ENCODE measurements at regions of chr11 and their contacts with region 1.

Region 1: GRCh38 chr11:130671801-130672700 is 223.6 kb downstream of the ADAMTS15 start:
- DNase-seq: peak; percentile 94
- ATAC-seq: peak; percentile 89
- H3K4me3 ChIP-seq: no peak overlapping the region
- H3K27ac ChIP-seq: peak overlapping the region; percentile 41; the same call in 1 of the 2 replicates
- H3K4me1 ChIP-seq: peaks cover 20% of the 10 kb centered on the region
- H3K27me3 ChIP-seq: no peaks in the 10 kb centered on the region
- CTCF ChIP-seq: no peak
- POLR2A ChIP-seq: no peak
- RAD21 ChIP-seq: peak; percentile 40

Region 2: DNA sequence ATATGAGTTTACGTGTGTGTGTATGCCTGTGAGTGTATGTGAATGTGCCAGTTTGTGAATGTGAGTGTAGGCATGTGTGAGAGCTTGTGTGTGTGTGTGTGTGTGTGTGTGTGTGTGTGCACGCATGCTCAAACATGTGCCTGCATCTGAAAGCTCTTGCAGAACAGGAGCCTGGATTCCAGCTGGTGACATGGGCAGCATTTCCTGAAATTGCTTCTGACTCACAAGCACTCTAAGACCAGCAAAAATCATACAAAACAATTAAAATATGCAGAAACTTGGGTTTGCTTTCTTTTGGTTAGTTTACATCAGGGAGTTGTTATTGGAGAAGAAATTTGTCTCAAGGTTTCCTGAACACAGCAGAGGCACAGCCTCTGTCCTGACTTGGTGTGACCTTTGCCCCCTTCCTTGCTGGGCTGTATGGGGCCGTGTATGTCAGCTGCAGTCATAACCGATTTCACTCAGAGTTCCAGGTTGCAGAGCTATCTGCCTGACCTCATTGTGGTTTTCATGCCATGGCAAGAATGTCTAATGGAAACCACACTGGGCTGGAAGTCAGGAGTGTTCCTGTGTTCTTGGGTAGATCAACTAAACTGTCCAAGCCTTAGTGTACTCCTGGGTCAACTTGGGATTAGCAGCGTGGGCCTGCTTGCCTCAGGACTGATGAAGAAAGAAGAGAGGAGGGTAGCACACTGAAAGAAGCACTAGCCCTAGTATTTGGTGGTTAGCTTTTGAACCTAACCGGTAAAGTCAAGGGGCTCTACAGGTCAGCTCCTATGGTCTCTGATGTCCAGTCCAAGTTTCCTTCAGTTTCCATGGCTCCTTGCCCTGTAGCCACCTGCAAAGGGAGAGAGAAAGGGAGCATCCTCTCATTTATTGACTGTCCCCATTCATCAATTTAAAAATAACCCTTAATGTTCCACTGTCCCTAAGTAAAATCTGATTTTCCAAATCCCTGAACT is 100.5 kb after region 1 on chr11:
- CTCF ChIA-PET with region 1: no interaction called
- POLR2A ChIA-PET with region 1: no interaction called
- dilution Hi-C with region 1: no loop called
- in situ Hi-C with region 1: no loop called
- intact Hi-C with region 1: loop called (anchors 5 kb)
- DNase-seq: peak; percentile 97
- ATAC-seq: peak; percentile 89
- H3K4me3 ChIP-seq: no peak overlapping the region
- H3K27ac ChIP-seq: peak overlapping the region; percentile 77; the same call in 1 of the 2 replicates
- H3K4me1 ChIP-seq: peaks cover 22% of the 10 kb centered on the region
- H3K27me3 ChIP-seq: no peaks in the 10 kb centered on the region
- CTCF ChIP-seq: no peak
- POLR2A ChIP-seq: no peak
- RAD21 ChIP-seq: no peak; the same call in 1 of the 2 replicates

Region 3: GRCh38 chr11:132028380-132029240 is 1356.6 kb after region 1 on chr11:
- CTCF ChIA-PET with region 1: no interaction called
- POLR2A ChIA-PET with region 1: no interaction called
- dilution Hi-C with region 1: no loop called
- in situ Hi-C with region 1: no loop called
- intact Hi-C with region 1: no loop called
- DNase-seq: peak; percentile 73
- ATAC-seq: 0 out of 2 replicates have a peak, but pooled peaks have one; percentile 27
- H3K4me3 ChIP-seq: no peak overlapping the region
- H3K27ac ChIP-seq: no peak overlapping the region
- H3K4me1 ChIP-seq: peaks cover 23% of the 10 kb centered on the region
- H3K27me3 ChIP-seq: no peaks in the 10 kb centered on the region
- CTCF ChIP-seq: peak; percentile 61
- POLR2A ChIP-seq: no peak
- RAD21 ChIP-seq: peak; percentile 47

Measured in IMR-90 (cell line).